ENCODE measurements at regions of chr22 and their contacts with region 1.

Region 1: DNA sequence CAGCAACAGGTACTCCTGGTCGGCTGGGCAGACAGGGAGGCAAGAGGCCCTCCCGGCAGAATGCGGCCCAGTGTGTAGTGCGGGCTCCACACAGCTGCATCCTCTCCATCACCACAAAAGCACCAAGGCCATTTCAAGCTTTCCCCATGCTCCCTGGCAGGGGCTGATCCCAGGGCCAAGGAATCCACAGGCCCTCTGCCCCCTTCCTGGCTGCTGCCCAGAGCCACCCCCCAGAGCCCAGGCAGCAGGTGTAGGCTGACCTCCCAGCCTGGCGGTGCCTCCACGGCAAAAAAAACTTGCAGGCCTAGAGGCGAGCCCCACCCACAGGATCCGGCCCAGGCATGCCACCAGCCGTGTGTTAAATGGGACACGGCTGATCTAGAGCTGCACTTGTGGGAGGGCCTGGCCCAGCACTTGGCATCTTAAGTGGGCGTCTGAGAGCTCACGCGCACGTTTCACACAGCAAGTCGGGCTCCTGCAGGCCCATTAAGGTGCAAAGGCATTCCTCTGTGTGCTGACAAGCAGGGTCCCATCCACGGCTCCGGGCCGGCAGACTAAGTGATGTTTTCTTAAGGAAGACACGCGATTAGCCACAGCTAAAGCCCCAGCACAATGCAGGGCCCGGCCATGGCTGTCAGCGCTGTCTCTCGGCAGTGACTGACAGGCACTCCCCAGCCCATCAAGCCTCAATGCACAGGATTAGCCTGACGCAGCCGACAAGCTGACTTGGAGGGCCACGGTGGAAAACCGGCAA is 19.8 kb upstream of the GNB1L start:
- DNase-seq: peak in 3 of 4 donors; percentile 5 to 19 (median 9)
- ATAC-seq: no peak
- H3K4me3 ChIP-seq: no peak overlapping the region
- H3K27ac ChIP-seq: peak overlapping the region in 1 of 4 donors; percentile 46
- H3K4me1 ChIP-seq: peaks cover 31% of the 10 kb centered on the region
- H3K27me3 ChIP-seq: no peaks in the 10 kb centered on the region
- CTCF ChIP-seq: no peak
- POLR2A ChIP-seq: no peak

Region 2: DNA sequence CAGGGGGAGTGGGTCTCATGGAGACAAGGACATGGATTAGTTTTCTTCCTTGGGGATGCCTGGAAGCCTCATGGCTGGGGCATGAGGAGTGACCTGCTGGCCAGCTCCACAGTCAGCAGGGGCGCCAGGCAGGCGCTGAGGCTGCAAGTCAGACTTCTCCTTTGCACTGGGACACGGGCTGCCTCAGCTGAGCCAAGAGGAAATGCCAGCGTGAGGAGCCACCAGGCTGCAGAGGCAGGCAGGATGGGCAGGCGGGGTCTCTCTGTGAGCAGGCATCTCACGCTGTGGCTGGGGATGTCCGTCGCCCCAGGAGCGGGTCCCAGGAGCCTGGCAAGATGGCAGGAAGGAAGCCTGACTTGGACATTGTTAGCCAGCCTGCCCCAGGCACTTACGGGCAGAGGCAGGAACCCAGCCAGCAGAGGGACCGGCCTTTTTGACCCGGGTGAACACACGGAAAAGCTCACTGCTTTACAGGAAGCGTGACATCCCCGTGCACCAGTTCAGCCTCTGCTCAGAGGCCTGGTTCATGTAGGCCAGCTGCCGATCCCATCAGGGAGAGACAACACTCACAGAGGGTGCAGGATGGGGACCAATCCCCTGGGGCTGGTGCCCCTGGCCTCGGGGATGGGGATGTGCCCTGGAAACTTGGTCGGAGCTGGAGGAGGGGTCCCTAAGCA is 30.0 kb before region 1 on chr22:
- intact Hi-C with region 1: loop called (anchors 5 kb)
- DNase-seq: peak in 3 of 4 donors; percentile 30 to 57 (median 48)
- ATAC-seq: peak; percentile 38
- H3K4me3 ChIP-seq: no peak overlapping the region
- H3K27ac ChIP-seq: peak overlapping the region in 2 of 4 donors; percentile 20 to 51
- H3K4me1 ChIP-seq: peaks cover 24% of the 10 kb centered on the region
- H3K27me3 ChIP-seq: no peaks in the 10 kb centered on the region
- CTCF ChIP-seq: no peak
- POLR2A ChIP-seq: no peak

Measured in body of pancreas (tissue), 4 donors.